ENCODE measurements at regions of chr15 and their contacts with region 1.

Region 1: DNA sequence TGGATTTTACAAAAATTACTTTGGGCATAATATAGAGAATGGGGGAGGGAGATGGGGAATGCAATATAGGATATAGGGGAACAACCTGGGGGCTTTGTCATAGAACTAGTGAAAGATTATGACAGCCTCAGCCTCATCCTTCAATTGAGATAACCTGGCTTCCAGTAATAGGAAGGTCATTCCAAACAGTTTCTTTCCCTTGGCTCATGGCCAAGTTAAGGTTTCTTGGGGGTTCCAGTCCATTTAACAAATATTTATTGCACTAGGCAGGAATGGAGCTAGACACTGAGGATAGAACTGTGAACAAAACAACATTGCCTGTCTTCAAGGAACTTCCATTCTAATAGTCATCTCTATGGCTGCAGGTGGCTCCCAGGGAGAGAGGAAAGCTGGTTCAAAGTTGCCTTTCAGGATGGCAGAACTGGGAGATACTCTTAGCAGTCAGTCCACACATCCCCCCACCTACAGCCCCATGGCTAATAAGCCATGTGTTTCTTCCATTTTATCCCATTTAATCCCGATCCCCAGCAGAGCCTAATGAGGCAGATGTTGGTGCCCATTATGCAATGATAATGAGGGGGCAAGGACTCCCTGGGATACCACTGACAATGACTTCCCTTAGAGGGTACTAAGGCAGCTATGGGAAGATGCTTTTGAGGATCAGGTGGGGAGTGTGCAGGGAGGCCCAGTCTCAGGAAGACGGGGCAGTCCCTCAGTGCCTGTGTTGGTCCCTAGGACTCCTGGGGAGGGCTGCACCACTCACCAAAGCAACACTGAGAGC is 44.0 kb upstream of the TBC1D21 start:
- DNase-seq: no peak
- H3K4me3 ChIP-seq: no peak overlapping the region
- H3K27ac ChIP-seq: peak overlapping the region in 1 of 2 experiments; percentile 72; a peak in 2 of 4 replicates
- H3K4me1 ChIP-seq: peaks cover 0 to 15% of the 10 kb centered on the region in 2 experiments; a peak in 1 of 4 replicates
- H3K27me3 ChIP-seq: no peaks in the 10 kb centered on the region; the same call in 1 of the 2 replicates
- CTCF ChIP-seq: no peak
- EP300 ChIP-seq: no peak
- RAD21 ChIP-seq: no peak

Region 2: GRCh38 chr15:73818308-73818985 is 10.9 kb before region 1 on chr15:
- CTCF ChIA-PET with region 1: interaction called, 12 read pairs
- POLR2A ChIA-PET with region 1: no interaction called
- DNase-seq: peak; percentile 81
- H3K4me3 ChIP-seq: no peak overlapping the region
- H3K27ac ChIP-seq: peak overlapping the region in 1 of 2 experiments; percentile 66; a peak in 2 of 4 replicates
- H3K4me1 ChIP-seq: peaks cover 0 to 19% of the 10 kb centered on the region in 2 experiments; a peak in 1 of 4 replicates
- H3K27me3 ChIP-seq: peaks cover 5% of the 10 kb centered on the region; the same call in 1 of the 2 replicates
- CTCF ChIP-seq: no peak
- EP300 ChIP-seq: peak in 1 of 2 experiments; percentile 62; a peak in 1 of 4 replicates
- RAD21 ChIP-seq: no peak